ENCODE measurements at regions of chr10 and their contacts with region 1.

Region 1: DNA sequence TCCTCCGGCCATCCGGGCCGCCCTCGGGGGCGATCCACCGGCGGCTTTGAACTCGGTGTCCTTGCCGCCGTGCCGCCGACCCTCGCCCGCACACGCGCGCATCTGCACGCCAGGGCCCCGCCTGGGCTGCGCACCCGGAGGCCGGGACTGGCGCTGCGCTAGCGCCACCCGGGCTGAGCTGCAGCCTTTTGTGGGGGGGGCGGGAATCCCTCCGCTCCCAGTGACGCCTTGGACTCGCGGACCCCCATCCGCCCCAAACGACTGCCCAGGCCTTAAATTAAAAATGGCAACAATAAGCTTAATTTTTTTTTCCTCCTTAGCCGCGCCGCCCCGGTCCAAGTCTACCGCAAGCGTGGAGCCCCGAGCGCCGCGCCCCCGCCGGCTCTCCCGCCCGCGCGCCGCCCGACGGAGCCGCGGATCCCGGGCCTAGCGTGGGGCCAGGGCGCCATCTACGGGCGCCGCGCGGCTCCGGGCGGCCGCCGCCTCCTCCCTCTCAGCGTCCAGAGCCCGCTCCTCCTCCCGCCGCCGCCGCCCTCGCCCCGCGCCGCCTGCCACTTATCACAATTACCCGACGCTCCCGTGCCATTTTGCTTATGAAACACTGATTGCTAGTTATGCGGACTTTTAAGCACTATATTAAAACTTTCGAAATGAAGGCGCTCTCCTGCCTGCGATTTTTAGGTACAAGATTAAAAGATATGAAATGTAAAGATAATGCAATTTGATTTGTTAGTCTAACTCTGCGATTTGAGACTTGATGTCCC is 7.5 kb upstream of the EBF3 start:
- DNase-seq: peak; percentile 35
- H3K4me3 ChIP-seq: no peak overlapping the region
- H3K27ac ChIP-seq: no peak overlapping the region
- H3K4me1 ChIP-seq: no peaks in the 10 kb centered on the region
- H3K27me3 ChIP-seq: peaks cover 57 to 73% of the 10 kb centered on the region in 2 experiments
- CTCF ChIP-seq: peak; percentile 41 to 50
- POLR2A ChIP-seq: no peak

Region 2: DNA sequence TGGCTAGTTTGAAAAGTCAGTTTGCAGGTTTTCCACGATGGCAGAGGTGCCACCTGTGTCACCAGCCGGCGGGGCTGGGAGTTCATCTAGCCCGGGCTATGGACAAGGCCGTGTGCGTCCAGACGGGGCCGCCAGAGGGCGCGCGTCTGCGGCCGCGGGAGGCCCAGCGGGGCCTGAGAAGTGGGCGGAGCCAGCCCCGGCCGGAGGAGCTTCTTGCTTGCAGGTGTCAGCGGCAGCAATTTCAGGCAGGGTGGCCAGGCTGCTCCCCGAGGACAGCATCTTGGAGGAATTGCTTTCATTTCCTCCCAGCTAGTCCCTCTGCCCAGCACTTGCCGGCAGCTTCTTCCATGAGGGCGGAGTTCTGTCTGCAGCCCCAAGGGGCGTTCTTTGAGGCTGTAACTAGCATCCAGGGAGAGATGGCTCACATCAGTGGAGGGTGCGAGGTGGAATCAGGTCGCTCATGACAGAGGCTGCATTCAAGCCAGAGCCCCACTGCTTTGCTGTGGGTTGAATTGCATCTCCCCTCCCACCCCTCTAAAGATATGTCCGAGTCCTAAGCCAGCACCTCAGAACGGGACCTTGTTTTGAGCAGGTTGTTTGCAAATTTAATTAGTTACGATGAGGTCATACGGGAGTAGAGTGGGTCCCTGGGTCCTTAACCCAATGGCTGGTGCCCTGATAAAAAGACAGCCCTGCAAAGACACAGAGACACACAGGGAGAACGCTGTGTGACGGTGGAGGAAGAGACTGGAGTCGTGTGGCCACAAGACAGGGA is 1759.4 kb before region 1 on chr10:
- CTCF ChIA-PET with region 1: interaction called, 36 read pairs
- POLR2A ChIA-PET with region 1: no interaction called
- dilution Hi-C with region 1: no loop called
- intact Hi-C with region 1: loop called (anchors 1 kb)
- DNase-seq: peak; percentile 72
- H3K4me3 ChIP-seq: no peak overlapping the region
- H3K27ac ChIP-seq: no peak overlapping the region
- H3K4me1 ChIP-seq: peaks cover 9% of the 10 kb centered on the region
- H3K27me3 ChIP-seq: no peaks in the 10 kb centered on the region
- CTCF ChIP-seq: peak; percentile 99 to 100
- POLR2A ChIP-seq: no peak

Region 3: DNA sequence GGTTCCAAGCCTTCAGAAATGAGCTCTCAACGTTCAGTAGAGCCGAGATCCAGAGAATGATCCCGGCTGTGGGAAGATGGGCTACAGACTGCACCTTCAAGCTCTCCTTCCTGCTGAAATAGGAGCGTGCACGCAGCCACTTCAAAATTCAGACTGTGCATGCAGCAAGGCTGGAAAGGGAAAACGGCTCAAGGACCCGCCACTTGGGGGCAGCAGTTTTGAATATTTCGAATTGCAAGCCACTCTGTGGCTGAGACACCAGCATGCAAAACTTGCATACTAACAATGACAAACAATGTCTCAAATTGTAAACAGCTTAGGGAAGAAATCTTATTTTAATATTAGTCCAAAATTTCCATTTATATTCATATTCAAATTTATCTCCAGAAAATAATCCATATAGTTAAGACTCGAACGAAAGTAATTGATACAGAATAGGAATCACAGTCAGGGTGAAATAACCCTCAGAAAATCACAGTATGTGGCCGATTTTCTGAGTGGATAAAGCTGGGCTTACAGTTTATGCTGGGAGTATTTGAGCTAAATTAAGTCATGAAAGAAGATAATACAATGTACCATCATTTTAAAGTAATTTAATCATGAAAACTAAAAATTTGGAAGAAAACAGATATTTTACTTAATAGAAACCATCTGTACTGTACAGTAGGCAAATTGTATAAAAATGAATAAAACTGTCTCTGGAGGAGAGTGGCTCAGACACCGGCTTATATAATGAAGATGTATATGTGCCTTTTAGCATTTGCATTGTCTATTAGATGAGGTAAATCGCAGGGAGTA is 1707.5 kb before region 1 on chr10:
- CTCF ChIA-PET with region 1: interaction called, 47 read pairs
- POLR2A ChIA-PET with region 1: no interaction called
- dilution Hi-C with region 1: no loop called
- intact Hi-C with region 1: loop called (anchors 1 kb)
- DNase-seq: peak; percentile 52
- H3K4me3 ChIP-seq: no peak overlapping the region
- H3K27ac ChIP-seq: no peak overlapping the region
- H3K4me1 ChIP-seq: no peaks in the 10 kb centered on the region
- H3K27me3 ChIP-seq: peaks cover 2 to 12% of the 10 kb centered on the region in 2 experiments
- CTCF ChIP-seq: peak; percentile 60 to 73
- POLR2A ChIP-seq: no peak

Region 4: GRCh38 chr10:128631801-128632241 is 1339.7 kb before region 1 on chr10:
- CTCF ChIA-PET with region 1: no interaction called
- POLR2A ChIA-PET with region 1: no interaction called
- dilution Hi-C with region 1: no loop called
- intact Hi-C with region 1: loop called (anchors 5 kb)
- DNase-seq: no peak
- H3K4me3 ChIP-seq: no peak overlapping the region
- H3K27ac ChIP-seq: no peak overlapping the region
- H3K4me1 ChIP-seq: no peaks in the 10 kb centered on the region
- H3K27me3 ChIP-seq: no peaks in the 10 kb centered on the region
- CTCF ChIP-seq: peak; percentile 21 to 25
- POLR2A ChIP-seq: no peak

Region 5: DNA sequence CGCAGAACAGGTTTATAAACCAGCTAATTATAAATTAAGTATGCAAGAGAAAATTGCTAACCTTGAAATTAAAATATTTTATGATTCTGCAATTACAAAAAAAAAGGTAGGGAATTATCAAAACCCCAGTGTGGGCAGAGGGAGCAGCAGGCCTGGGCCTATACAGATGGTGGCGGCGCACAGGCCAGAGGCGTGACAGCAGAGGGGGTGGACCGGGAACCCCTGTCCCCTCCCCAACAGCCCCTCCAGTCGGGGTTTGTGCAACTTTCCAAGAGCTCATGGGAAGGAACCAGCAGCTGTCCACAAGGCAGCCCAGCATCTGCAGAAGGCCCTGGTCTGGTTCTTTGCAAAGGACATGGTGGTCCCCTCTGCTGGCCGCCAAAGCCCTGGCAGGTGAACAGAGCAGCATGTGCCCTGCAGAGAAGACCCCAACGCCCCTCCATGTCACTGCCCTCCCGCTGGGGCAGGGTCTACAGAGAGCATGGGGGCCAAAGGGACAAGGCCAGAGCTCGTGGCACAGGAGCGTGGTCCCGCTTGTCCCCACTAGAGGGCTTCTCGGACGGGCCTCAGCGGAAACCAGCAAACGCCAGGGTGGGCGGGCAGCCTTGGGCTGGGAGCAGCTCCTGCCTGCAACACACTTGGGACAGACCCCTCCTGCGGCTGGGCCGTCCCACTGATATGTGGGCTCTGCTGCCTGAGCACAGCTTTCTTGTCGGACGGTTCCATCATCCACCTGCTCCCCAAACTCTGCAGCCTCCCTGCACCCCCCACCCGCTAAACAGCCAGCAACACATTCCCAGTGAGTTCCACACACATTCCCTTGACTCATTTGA is 82.6 kb before region 1 on chr10:
- CTCF ChIA-PET with region 1: no interaction called
- POLR2A ChIA-PET with region 1: no interaction called
- dilution Hi-C with region 1: no loop called
- intact Hi-C with region 1: loop called (anchors 1 kb)
- DNase-seq: peak; percentile 2
- H3K4me3 ChIP-seq: no peak overlapping the region
- H3K27ac ChIP-seq: no peak overlapping the region
- H3K4me1 ChIP-seq: no peaks in the 10 kb centered on the region
- H3K27me3 ChIP-seq: no peaks in the 10 kb centered on the region
- CTCF ChIP-seq: peak; percentile 53 to 57
- POLR2A ChIP-seq: no peak

Region 6: DNA sequence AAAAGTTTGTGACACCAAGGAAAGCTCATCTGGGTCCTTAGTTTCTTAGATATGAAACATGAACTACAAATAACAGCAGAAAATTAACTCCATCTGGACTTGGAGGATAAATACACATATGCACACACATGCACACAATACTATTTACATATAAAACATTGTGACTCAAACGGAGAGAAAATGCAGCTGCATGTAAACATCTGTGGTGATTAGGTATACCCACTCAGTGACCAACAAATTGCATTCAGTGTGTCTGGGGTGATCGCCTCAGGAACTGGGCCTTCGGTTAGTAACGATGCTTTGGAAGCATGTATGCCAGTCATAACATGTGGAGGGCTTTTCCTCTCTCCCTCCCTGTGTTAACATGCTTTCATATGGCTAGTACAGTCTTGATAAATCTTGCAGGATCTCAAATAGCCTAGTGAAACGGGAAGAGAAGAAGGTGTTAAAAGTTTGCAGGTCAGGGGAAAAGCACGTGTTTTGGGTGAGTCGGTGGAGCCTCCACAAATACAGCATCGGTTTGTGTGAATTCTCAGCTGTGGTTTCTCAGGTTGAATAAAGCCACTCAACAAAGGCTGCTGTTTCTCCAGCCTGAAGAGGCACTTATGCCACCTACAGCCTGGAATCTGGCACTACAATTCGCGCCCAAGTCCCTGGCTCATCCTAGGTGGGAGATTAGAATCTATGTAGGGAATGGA is 155.9 kb after region 1 on chr10:
- CTCF ChIA-PET with region 1: no interaction called
- POLR2A ChIA-PET with region 1: no interaction called
- dilution Hi-C with region 1: no loop called
- intact Hi-C with region 1: loop called (anchors 5 kb)
- DNase-seq: peak; percentile 76
- H3K4me3 ChIP-seq: no peak overlapping the region
- H3K27ac ChIP-seq: no peak overlapping the region
- H3K4me1 ChIP-seq: no peaks in the 10 kb centered on the region
- H3K27me3 ChIP-seq: peaks cover 5 to 8% of the 10 kb centered on the region in 2 experiments
- CTCF ChIP-seq: peak; percentile 73
- POLR2A ChIP-seq: no peak

Region 7: GRCh38 chr10:130179640-130180039 is 208.1 kb after region 1 on chr10:
- CTCF ChIA-PET with region 1: interaction called, 4 read pairs
- POLR2A ChIA-PET with region 1: no interaction called
- dilution Hi-C with region 1: no loop called
- intact Hi-C with region 1: loop called (anchors 5 kb)
- DNase-seq: peak; percentile 82
- H3K4me3 ChIP-seq: no peak overlapping the region
- H3K27ac ChIP-seq: no peak overlapping the region
- H3K4me1 ChIP-seq: no peaks in the 10 kb centered on the region
- H3K27me3 ChIP-seq: no peaks in the 10 kb centered on the region
- CTCF ChIP-seq: peak; percentile 38 to 46
- POLR2A ChIP-seq: no peak

Measured in endothelial cell of umbilical vein (primary cell).